A549 (cell line): ENCODE measurements at regions of chr4 and their contacts with region 1.

Region 1: GRCh38 chr4:89248879-89249281 is 58.7 kb downstream of the GPRIN3 start:
- DNase-seq: no peak
- ATAC-seq: no peak
- H3K4me3 ChIP-seq: no peak overlapping the region
- H3K27ac ChIP-seq: no peak overlapping the region
- H3K4me1 ChIP-seq: peaks cover 53% of the 10 kb centered on the region
- CTCF ChIP-seq: no peak
- EP300 ChIP-seq: no peak
- POLR2A ChIP-seq: no peak
- RAD21 ChIP-seq: no peak

Region 2: GRCh38 chr4:88937081-88937480 is 311.8 kb before region 1 on chr4:
- CTCF ChIA-PET with region 1: no interaction called
- POLR2A ChIA-PET with region 1: no interaction called
- DNase-seq: no peak
- ATAC-seq: no peak
- H3K4me3 ChIP-seq: no peak overlapping the region
- H3K27ac ChIP-seq: no peak overlapping the region
- H3K4me1 ChIP-seq: peaks cover 10% of the 10 kb centered on the region; the same call in 2 of the 3 replicates
- CTCF ChIP-seq: no peak
- EP300 ChIP-seq: no peak
- POLR2A ChIP-seq: no peak
- RAD21 ChIP-seq: no peak

Region 3: DNA sequence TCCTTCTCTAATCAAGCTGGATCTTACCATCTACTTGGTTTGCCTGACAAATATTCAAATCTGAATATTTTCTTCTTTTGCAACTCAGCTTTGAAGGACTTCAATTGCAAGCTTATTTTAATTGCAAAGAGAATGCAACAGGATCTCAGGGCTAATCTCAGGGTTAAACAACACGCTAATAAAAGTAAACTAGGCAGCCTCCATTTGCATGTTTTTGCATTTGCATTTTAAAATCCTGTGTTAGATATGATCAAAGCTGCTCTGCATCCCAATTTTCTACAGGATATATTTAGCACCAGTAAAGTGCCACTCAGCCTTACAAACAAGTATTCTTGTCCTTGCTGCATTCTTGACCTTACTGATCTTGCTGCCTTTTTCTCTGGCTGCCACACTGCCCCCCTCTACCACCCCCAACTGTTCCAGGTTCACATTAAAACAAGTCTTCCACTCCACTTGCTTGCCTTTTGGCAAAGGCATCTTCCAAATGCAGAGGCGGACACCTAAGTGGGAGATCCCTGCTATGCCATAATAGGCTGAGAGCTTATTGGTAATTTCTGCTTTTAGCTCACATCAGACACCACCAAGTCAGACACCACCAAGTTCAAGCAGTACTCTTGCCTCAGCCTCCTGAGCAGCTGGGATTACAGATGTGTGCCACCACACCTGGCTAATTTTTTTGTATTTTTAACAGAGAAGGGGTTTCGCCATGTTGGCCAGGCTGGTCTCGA is 10.6 kb after region 1 on chr4:
- CTCF ChIA-PET with region 1: interaction called, 10 read pairs
- POLR2A ChIA-PET with region 1: no interaction called
- DNase-seq: no peak
- ATAC-seq: no peak
- H3K4me3 ChIP-seq: no peak overlapping the region
- H3K27ac ChIP-seq: peak overlapping the region in 1 of 2 experiments; percentile 48; a peak in 1 of 6 replicates
- H3K4me1 ChIP-seq: peaks cover 61% of the 10 kb centered on the region
- CTCF ChIP-seq: no peak
- EP300 ChIP-seq: no peak
- POLR2A ChIP-seq: no peak
- RAD21 ChIP-seq: no peak

Region 4: DNA sequence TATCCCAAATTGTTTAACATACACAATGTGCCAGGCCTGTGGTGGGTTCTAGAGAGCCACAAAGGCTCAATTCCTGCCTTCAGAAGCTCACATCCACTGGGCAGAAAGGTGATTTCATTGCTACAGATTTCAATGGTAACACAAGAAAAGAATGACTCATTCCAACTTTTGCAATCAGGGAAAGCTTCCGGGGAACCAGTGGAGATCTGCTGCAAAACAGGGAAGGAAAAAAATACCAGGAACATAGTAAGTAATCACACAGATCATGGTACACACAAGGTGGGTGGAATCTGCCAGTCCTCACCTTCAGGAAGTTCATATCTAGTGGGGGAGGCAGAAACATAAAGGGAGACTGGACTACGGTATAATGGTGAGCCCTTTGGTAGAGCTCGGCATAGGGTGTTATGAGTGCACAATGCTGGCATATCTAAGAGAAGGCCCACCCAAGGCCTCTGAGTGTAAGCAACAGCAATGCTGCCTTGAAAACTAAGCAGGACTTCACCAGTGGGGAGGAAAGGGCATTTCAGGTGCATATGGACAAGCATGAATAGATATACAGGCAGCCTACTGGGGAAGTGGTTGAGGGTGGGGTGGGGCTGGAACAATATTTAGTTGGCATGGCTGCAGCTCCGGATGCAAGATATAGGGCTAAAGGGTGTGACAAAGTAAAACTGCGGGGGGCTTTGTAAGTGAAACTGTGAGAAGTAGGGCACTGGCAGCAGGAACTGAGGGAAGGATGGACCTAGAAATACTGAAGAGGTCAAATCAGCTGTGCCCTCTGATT is 34.5 kb after region 1 on chr4:
- CTCF ChIA-PET with region 1: no interaction called
- POLR2A ChIA-PET with region 1: no interaction called
- DNase-seq: peak in 1 of 2 experiments; percentile 74
- ATAC-seq: peak; percentile 66 to 81
- H3K4me3 ChIP-seq: no peak overlapping the region
- H3K27ac ChIP-seq: peak overlapping the region; percentile 85 to 90
- H3K4me1 ChIP-seq: peaks cover 69% of the 10 kb centered on the region
- CTCF ChIP-seq: no peak
- EP300 ChIP-seq: peak in 1 of 2 experiments; percentile 46; a peak in 1 of 5 replicates
- POLR2A ChIP-seq: no peak
- RAD21 ChIP-seq: no peak